Mammary epithelial cell (primary cell): ENCODE measurements at regions of chrX and their contacts with region 1.

Region 1: DNA sequence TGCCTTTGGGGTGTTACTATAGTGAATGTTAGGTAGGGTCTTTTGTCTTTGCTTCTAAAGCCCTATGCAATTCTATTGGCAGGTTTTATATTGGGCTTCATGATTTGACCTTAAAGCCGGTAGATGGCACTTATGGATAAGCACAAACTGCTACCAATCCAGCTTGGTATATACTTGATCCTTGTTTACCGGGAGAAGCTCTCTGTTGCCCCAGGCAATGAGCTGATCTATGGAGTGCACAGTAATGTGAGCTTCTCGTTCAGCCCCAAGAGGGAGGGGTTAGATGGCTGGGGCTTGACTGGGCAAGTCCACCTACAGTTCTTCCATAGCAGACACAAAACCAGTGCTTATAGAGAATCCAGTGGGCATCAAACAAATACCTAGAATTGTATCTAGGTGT is 287.2 kb upstream of the CT83 start:
- DNase-seq: peak; percentile 84
- H3K4me3 ChIP-seq: no peak overlapping the region
- H3K27ac ChIP-seq: no peak overlapping the region
- H3K4me1 ChIP-seq: peaks cover 5% of the 10 kb centered on the region
- H3K27me3 ChIP-seq: no peaks in the 10 kb centered on the region
- CTCF ChIP-seq: peak; percentile 2 to 34

Region 2: DNA sequence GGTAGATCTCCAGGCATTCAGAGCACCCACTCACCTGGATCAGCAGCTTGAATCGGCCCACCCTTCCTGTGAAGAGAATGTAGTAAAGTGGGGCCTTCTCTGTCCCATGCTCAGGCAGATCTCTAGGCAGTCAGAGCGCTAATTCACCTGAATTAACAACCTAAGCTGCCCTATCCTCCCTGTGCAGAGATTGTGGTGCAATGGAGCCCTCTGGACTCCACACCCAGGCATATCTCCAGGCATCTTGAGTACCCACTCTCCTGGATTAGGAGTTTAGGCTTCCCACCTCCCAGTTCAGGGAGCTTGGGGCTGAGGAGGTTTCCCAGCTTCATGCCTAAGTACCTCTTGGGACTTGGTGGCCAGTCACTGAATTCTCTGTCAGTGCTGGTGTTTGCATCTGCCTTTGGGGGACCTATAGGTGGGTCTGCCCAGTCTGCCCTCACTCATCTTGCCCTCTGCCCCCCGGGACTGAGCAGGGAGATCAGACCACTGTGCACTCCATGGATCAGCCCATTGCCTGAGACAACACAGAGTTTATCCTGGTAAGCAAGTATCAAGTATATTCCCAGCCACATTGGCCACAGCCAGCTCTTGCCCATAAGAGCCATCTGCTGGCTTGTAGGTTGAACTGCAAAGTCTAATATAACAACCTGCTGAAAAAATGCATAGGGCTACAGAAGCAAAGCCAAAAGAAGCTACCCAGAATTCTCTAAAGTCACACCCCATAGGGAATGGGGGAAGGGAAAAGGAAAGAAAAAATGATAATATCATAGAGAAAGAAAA is 993.7 kb after region 1 on chrX:
- CTCF ChIA-PET with region 1: no interaction called
- dilution Hi-C with region 1: no loop called
- in situ Hi-C with region 1: no loop called
- intact Hi-C with region 1: loop called (anchors 5 kb)
- DNase-seq: peak; percentile 14
- H3K4me3 ChIP-seq: no peak overlapping the region
- H3K27ac ChIP-seq: no peak overlapping the region
- H3K4me1 ChIP-seq: no peaks in the 10 kb centered on the region
- H3K27me3 ChIP-seq: no peaks in the 10 kb centered on the region
- CTCF ChIP-seq: peak; percentile 63 to 81